ENCODE measurements at regions of chr9 and their contacts with region 1.

Region 1: GRCh38 chr9:131046581-131047202 is 37.7 kb downstream of the LAMC3 start:
- DNase-seq: peak in 3 of 4 experiments; percentile 99 to 100 (median 99)
- ATAC-seq: peak; percentile 93
- H3K4me3 ChIP-seq: no peak overlapping the region
- H3K27ac ChIP-seq: no peak overlapping the region
- H3K4me1 ChIP-seq: peaks cover 0 to 23% of the 10 kb centered on the region in 2 experiments; a peak in 3 of 5 replicates
- H3K27me3 ChIP-seq: peaks cover 55 to 73% of the 10 kb centered on the region in 2 experiments
- CTCF ChIP-seq: no peak
- EP300 ChIP-seq: no peak
- POLR2A ChIP-seq: no peak
- RAD21 ChIP-seq: no peak

Region 2: GRCh38 chr9:129696938-129697650 is 1349.6 kb before region 1 on chr9:
- CTCF ChIA-PET with region 1: no interaction called
- POLR2A ChIA-PET with region 1: no interaction called
- in situ Hi-C with region 1: no loop called
- intact Hi-C with region 1: no loop called
- DNase-seq: peak in 2 of 4 experiments; percentile 51 to 53
- ATAC-seq: peak; percentile 22; the same call in 1 of the 3 replicates
- H3K4me3 ChIP-seq: no peak overlapping the region
- H3K27ac ChIP-seq: no peak overlapping the region
- H3K4me1 ChIP-seq: peaks cover 0 to 14% of the 10 kb centered on the region in 2 experiments; a peak in 2 of 5 replicates
- H3K27me3 ChIP-seq: peaks cover 65 to 83% of the 10 kb centered on the region in 2 experiments
- CTCF ChIP-seq: no peak
- EP300 ChIP-seq: no peak
- POLR2A ChIP-seq: no peak
- RAD21 ChIP-seq: no peak

Region 3: DNA sequence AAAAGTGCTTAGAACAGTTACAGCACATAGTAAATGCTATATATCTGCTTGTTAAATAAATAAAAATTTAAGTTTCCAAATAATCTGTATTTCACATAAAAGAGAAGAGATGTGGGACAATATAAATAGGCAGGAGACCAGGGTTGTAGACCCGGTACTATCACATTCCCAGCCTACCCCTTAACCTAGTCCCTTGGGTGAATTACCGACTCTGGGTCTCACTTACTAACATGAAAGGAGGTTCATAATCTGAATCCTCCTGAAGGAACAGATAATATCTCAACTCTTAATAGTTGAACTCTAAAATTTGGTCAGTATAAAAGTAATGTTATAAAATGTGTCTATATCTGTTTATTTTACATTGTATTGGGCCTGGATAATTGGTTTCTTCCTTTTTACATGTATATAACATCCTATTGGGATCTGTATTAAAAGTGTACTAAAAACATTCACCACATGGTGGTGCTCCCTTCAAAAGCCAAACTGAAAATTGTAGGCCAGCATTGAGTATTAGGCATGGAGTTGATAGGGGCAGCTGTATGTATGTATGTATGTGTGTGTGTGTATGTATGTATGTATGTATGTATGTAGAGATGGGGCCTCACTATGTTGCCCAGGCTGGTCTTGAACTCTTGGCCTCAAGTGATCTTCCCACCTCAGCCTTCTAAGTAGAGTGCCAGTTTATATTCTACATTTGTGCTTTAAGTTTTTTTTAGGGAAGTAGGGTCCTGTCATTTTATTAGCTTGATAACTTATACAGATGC is 275.8 kb before region 1 on chr9:
- CTCF ChIA-PET with region 1: interaction called, 7 read pairs
- POLR2A ChIA-PET with region 1: interaction called, 3 read pairs
- in situ Hi-C with region 1: no loop called
- intact Hi-C with region 1: loop called (anchors 1 kb)
- DNase-seq: peak; percentile 91 to 98 (median 95)
- ATAC-seq: peak; percentile 89
- H3K4me3 ChIP-seq: no peak overlapping the region
- H3K27ac ChIP-seq: no peak overlapping the region
- H3K4me1 ChIP-seq: peaks cover 6 to 8% of the 10 kb centered on the region in 2 experiments; a peak in 4 of 5 replicates
- H3K27me3 ChIP-seq: no peaks in the 10 kb centered on the region
- CTCF ChIP-seq: no peak
- EP300 ChIP-seq: no peak
- POLR2A ChIP-seq: no peak
- RAD21 ChIP-seq: no peak

Region 4: DNA sequence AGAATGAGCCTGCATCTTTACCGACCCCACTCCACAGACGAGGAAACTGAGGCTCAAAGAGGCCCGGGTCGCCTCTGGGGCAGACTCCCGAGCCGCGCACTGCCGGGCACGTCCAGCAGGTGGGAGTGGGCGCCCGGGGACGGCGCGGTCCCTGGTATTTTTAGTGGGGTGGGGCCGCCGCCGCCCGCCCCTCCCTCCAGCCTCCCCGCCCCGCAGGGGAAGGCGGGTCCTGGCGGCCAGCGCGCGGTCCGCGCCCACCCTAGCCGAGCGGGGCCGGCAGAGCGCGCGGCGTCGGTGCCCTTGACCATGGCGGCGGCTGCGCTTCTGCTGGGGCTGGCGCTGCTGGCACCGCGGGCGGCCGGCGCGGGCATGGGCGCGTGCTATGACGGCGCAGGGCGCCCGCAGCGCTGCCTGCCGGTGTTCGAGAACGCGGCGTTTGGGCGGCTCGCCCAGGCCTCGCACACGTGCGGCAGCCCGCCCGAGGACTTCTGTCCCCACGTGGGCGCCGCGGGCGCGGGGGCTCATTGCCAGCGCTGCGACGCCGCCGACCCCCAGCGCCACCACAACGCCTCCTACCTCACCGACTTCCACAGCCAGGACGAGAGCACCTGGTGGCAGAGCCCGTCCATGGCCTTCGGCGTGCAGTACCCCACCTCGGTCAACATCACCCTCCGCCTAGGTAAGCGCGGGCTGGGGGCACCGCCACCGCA is 37.6 kb before region 1 on chr9 and contains the start of gene LAMC3:
- CTCF ChIA-PET with region 1: interaction called, 4 read pairs
- POLR2A ChIA-PET with region 1: interaction called, 15 read pairs
- in situ Hi-C with region 1: no loop called
- intact Hi-C with region 1: no loop called
- DNase-seq: peak; percentile 56 to 67 (median 60)
- ATAC-seq: peak; percentile 23
- H3K4me3 ChIP-seq: no peak within 1 kb of the TSS
- H3K27ac ChIP-seq: no peak within 1 kb of the TSS
- H3K4me1 ChIP-seq: peaks cover 7 to 24% of the 10 kb centered on the region in 2 experiments; a peak in 3 of 5 replicates
- H3K27me3 ChIP-seq: peaks cover 72 to 86% of the 10 kb centered on the region in 2 experiments
- CTCF ChIP-seq: no peak
- EP300 ChIP-seq: no peak
- POLR2A ChIP-seq: no peak
- RAD21 ChIP-seq: no peak
- polyA plus RNA-seq, gene LAMC3: not detected

Region 5: GRCh38 chr9:131018621-131019020 is 28.1 kb before region 1 on chr9:
- CTCF ChIA-PET with region 1: interaction called, 3 read pairs
- POLR2A ChIA-PET with region 1: interaction called, 9 read pairs
- in situ Hi-C with region 1: no loop called
- intact Hi-C with region 1: loop called (anchors 2 kb)
- DNase-seq: peak in 1 of 4 experiments; percentile 75
- ATAC-seq: peak; percentile 26
- H3K4me3 ChIP-seq: no peak overlapping the region
- H3K27ac ChIP-seq: no peak overlapping the region
- H3K4me1 ChIP-seq: peaks cover 0 to 14% of the 10 kb centered on the region in 2 experiments; a peak in 1 of 5 replicates
- H3K27me3 ChIP-seq: peaks cover 85 to 95% of the 10 kb centered on the region in 2 experiments
- CTCF ChIP-seq: no peak
- EP300 ChIP-seq: no peak
- POLR2A ChIP-seq: no peak
- RAD21 ChIP-seq: no peak

Region 6: DNA sequence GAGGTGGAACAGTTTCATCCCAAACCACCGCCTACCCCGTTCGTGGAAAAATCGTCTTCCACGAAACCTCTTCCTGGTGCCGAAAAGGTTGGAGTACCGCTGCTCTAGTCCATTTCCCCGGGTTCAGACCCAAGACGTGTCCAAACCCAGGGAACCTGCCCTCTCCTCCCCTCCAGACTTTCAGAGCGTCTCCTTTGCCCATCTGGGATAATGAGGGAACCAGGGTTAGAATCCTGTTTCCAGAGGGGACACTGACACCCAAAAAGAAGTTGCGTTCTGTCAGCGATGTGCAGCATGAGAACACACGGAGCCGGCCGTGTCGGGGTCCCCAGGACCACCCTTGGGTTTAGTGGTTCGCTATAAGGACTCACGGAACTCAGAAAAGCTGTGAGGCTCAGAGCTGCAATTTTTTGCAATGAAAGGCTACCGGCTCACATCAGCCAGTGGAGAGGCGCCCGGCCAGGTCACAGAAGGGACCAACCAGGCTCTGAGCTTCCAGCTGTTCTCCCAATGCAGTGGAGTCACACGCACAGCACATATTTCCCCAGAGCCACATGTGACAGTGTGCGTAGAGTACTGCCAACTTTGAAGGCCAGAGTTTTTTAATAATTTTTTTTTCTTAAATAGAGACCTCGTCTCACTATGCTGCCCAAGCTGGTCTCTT is 18.3 kb before region 1 on chr9:
- CTCF ChIA-PET with region 1: no interaction called
- POLR2A ChIA-PET with region 1: interaction called, 29 read pairs
- in situ Hi-C with region 1: no loop called
- intact Hi-C with region 1: no loop called
- DNase-seq: peak in 3 of 4 experiments; percentile 61 to 70 (median 64)
- ATAC-seq: peak; percentile 1; the same call in 1 of the 3 replicates
- H3K4me3 ChIP-seq: no peak overlapping the region
- H3K27ac ChIP-seq: no peak overlapping the region
- H3K4me1 ChIP-seq: peaks cover 0 to 20% of the 10 kb centered on the region in 2 experiments; a peak in 3 of 5 replicates
- H3K27me3 ChIP-seq: peaks cover 92 to 96% of the 10 kb centered on the region in 2 experiments
- CTCF ChIP-seq: no peak
- EP300 ChIP-seq: no peak
- POLR2A ChIP-seq: no peak
- RAD21 ChIP-seq: no peak

Region 7: GRCh38 chr9:131273146-131273855 is 226.6 kb after region 1 on chr9:
- CTCF ChIA-PET with region 1: no interaction called
- POLR2A ChIA-PET with region 1: no interaction called
- in situ Hi-C with region 1: no loop called
- intact Hi-C with region 1: no loop called
- DNase-seq: peak; percentile 94 to 96 (median 95)
- ATAC-seq: peak; percentile 42
- H3K4me3 ChIP-seq: peak overlapping the region; percentile 65
- H3K27ac ChIP-seq: peak overlapping the region; percentile 75
- H3K4me1 ChIP-seq: peaks cover 49 to 90% of the 10 kb centered on the region in 2 experiments
- H3K27me3 ChIP-seq: no peaks in the 10 kb centered on the region
- CTCF ChIP-seq: no peak
- EP300 ChIP-seq: no peak
- POLR2A ChIP-seq: no peak
- RAD21 ChIP-seq: no peak

Measured in K562 (cell line).